AG04449 (cell line): ENCODE measurements at regions of chr15 and their contacts with region 1.

Region 1: GRCh38 chr15:67303490-67304363 is 49.1 kb downstream of the IQCH start:
- DNase-seq: no peak
- H3K4me3 ChIP-seq: no peak overlapping the region
- CTCF ChIP-seq: no peak

Region 2: DNA sequence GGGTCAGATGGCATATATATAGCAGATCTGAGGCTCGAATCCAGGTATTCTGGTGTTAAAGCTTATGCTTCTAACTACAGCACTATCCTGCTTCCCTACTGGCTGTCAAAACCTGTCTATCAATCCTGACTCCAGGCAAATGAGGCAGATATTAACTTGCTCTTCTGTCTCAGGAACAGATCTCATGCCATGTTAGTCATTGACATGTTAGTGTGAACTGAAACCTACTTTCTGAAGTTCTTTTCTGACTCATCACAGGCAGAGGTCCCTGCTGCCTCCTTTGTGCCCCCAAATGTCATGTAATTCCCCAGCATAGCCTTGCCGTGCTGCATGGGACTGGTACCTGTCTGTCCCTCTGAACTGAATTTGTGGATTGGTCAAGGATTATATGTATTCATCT is 363.4 kb before region 1 on chr15:
- CTCF ChIA-PET with region 1: interaction called, 91 read pairs
- POLR2A ChIA-PET with region 1: no interaction called
- DNase-seq: no peak
- H3K4me3 ChIP-seq: no peak overlapping the region
- CTCF ChIP-seq: no peak

Region 3: DNA sequence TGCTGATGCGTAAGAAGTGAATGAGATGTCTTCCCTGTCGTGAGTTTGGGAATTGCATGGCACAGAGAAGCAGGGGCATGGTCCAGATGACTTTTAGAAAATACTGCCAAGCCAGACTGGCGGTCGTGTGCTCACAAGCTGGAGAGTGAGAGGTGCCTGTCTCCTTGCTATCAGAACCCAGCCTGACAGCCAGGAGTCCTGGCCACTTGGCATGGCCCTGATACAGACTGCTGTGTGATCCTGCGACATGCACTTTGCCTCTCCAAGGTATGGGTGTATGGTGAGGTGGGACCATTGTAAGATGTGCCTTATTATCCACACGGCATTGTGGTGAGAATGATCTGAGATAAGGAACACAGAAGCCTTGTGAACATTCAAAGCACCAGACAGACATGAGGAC is 145.3 kb before region 1 on chr15:
- CTCF ChIA-PET with region 1: no interaction called
- POLR2A ChIA-PET with region 1: no interaction called
- DNase-seq: no peak
- H3K4me3 ChIP-seq: no peak overlapping the region
- CTCF ChIP-seq: no peak